H1 (cell line): ENCODE measurements at regions of chr1 and their contacts with region 1.

Region 1: GRCh38 chr1:204806943-204807687 is 63.5 kb upstream of the NFASC start:
- DNase-seq: peak; percentile 64 to 97
- H3K4me3 ChIP-seq: peak overlapping the region; percentile 19 to 85 (median 70); a peak in 7 of 8 replicates
- H3K27ac ChIP-seq: no peak overlapping the region
- H3K4me1 ChIP-seq: peaks cover 0 to 4% (median 0%) of the 10 kb centered on the region in 4 experiments; a peak in 2 of 7 replicates
- H3K27me3 ChIP-seq: no peaks in the 10 kb centered on the region
- CTCF ChIP-seq: peak; percentile 73 to 99 (median 92)
- EP300 ChIP-seq: peak in 1 of 2 experiments; percentile 49; a peak in 1 of 3 replicates
- POLR2A ChIP-seq: no peak
- RAD21 ChIP-seq: peak; percentile 84 to 88

Region 2: DNA sequence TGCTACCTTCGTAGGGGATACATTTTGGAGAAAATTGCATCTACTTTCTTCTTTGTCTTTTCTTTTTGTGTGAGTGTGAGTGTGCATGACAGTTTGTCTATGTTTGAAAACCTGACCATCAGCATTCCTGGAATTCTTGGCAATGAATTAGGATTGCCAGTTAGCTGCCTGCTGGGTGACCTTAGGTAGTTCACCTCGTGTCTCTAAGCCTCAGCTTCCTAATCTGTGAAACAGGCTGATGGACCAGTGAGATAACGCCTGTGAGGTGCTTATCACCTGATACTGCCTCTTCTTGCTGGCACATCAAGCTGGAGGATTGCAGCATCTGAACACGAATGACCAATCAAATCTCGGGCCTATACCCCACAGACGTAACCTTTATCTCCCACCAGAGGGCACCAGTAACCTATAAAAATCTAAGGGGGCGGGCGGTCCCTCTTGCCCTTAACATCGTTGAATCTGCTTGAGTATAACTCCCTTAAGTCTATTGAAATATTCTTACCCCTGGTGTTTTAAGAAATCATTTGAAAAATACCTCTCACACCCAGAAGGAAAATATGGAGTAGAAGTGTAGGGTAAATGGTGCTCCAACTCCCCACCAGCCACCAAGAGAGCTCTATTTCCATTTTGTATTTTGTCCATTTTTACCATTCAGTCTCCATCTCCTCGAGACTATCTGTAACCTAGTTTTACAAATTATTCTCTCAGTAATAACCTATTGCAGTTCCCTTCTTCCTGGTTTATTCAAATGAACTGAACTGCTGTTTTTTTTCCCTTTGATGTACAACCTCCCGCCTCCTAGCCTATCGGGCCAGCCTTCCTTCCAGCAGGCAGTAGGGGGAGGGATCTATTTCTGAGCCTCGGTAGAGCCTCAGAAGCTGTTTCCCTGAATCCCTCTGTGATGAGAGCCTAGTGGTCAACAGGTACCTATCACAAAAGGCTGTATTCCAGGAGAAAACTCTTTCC is 241.2 kb before region 1 on chr1:
- CTCF ChIA-PET with region 1: interaction called, 397 read pairs
- POLR2A ChIA-PET with region 1: interaction called, 5 read pairs
- DNase-seq: peak in 1 of 2 experiments; percentile 63
- H3K4me3 ChIP-seq: peak overlapping the region in 1 of 4 experiments; percentile 34; a peak in 2 of 8 replicates
- H3K27ac ChIP-seq: peak overlapping the region; percentile 4; the same call in 1 of the 2 replicates
- H3K4me1 ChIP-seq: peaks cover 3 to 24% (median 13%) of the 10 kb centered on the region in 4 experiments; a peak in 6 of 7 replicates
- H3K27me3 ChIP-seq: no peaks in the 10 kb centered on the region; a peak in 1 of 7 replicates
- CTCF ChIP-seq: peak; percentile 36 to 83 (median 73)
- EP300 ChIP-seq: peak in 1 of 2 experiments; percentile 85; a peak in 1 of 3 replicates
- POLR2A ChIP-seq: no peak
- RAD21 ChIP-seq: peak; percentile 84 to 89

Region 3: DNA sequence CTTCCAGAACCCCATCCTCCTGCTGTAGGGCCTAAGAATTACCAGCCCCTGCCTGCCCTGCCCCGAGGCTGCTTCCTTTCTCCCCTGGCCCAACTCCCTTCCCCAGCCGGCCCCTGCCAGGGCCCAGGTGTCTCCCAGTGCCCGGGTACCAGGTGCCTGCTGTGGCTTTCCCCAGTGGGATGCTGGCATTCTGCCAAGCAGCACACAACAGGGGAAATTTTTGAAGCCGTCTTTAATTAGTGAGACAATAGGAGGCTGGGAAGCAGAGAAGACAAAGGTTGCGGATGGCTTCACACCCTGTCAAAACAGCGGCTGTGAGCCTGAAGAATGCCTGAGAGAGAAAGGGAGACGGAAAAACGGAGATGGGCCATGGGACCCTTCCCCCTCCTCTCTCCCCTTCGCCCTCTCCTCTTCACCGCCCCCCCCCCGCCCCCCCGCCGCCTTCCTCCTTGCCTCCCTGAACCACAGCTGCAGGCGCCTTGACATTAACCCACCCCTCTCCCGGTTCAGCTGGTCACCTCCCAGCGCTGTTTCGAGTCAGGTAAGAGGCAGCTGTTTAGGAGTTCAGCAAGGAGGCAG is 155.2 kb before region 1 on chr1:
- CTCF ChIA-PET with region 1: interaction called, 23 read pairs
- POLR2A ChIA-PET with region 1: no interaction called
- DNase-seq: peak; percentile 46 to 72
- H3K4me3 ChIP-seq: peak overlapping the region in 1 of 4 experiments; percentile 31; a peak in 2 of 8 replicates
- H3K27ac ChIP-seq: no peak overlapping the region
- H3K4me1 ChIP-seq: peaks cover 12 to 27% (median 16%) of the 10 kb centered on the region in 4 experiments
- H3K27me3 ChIP-seq: peaks cover 0 to 8% (median 0%) of the 10 kb centered on the region in 4 experiments; a peak in 2 of 7 replicates
- CTCF ChIP-seq: no peak
- EP300 ChIP-seq: no peak
- POLR2A ChIP-seq: no peak
- RAD21 ChIP-seq: no peak

Region 4: GRCh38 chr1:204706838-204707509 is 100.1 kb before region 1 on chr1:
- CTCF ChIA-PET with region 1: interaction called, 19 read pairs
- POLR2A ChIA-PET with region 1: no interaction called
- DNase-seq: peak in 1 of 2 experiments; percentile 69
- H3K4me3 ChIP-seq: peak overlapping the region in 1 of 4 experiments; percentile 10; a peak in 3 of 8 replicates
- H3K27ac ChIP-seq: no peak overlapping the region
- H3K4me1 ChIP-seq: peaks cover 31 to 43% (median 32%) of the 10 kb centered on the region in 4 experiments
- H3K27me3 ChIP-seq: peaks cover 22 to 55% (median 47%) of the 10 kb centered on the region in 4 experiments
- CTCF ChIP-seq: no peak
- EP300 ChIP-seq: 0 out of 3 replicates have a peak, but pooled peaks of 1 of the 2 experiments have one; percentile 5
- POLR2A ChIP-seq: no peak
- RAD21 ChIP-seq: no peak

Region 5: GRCh38 chr1:204751894-204752687 is 55.0 kb before region 1 on chr1:
- CTCF ChIA-PET with region 1: interaction called, 22 read pairs
- POLR2A ChIA-PET with region 1: no interaction called
- DNase-seq: peak; percentile 31 to 65
- H3K4me3 ChIP-seq: no peak overlapping the region
- H3K27ac ChIP-seq: no peak overlapping the region
- H3K4me1 ChIP-seq: peaks cover 0 to 7% (median 5%) of the 10 kb centered on the region in 4 experiments; a peak in 5 of 7 replicates
- H3K27me3 ChIP-seq: no peaks in the 10 kb centered on the region
- CTCF ChIP-seq: no peak; a peak in 1 of 4 replicates
- EP300 ChIP-seq: no peak
- POLR2A ChIP-seq: no peak
- RAD21 ChIP-seq: peak in 1 of 2 experiments; percentile 26; a peak in 1 of 4 replicates

Region 6: GRCh38 chr1:204828338-204828850 is 21.3 kb after region 1 on chr1:
- CTCF ChIA-PET with region 1: interaction called, 361 read pairs
- POLR2A ChIA-PET with region 1: interaction called, 4 read pairs
- DNase-seq: peak; percentile 43 to 93
- H3K4me3 ChIP-seq: peak overlapping the region; percentile 47 to 66 (median 55)
- H3K27ac ChIP-seq: no peak overlapping the region
- H3K4me1 ChIP-seq: peaks cover 3 to 10% (median 8%) of the 10 kb centered on the region in 4 experiments; a peak in 6 of 7 replicates
- H3K27me3 ChIP-seq: peaks cover 0 to 8% (median 3%) of the 10 kb centered on the region in 4 experiments; a peak in 4 of 7 replicates
- CTCF ChIP-seq: peak in 2 of 3 experiments; percentile 19 to 35; a peak in 3 of 4 replicates
- EP300 ChIP-seq: no peak
- POLR2A ChIP-seq: no peak
- RAD21 ChIP-seq: peak in 1 of 2 experiments; percentile 32; a peak in 1 of 4 replicates

Region 7: DNA sequence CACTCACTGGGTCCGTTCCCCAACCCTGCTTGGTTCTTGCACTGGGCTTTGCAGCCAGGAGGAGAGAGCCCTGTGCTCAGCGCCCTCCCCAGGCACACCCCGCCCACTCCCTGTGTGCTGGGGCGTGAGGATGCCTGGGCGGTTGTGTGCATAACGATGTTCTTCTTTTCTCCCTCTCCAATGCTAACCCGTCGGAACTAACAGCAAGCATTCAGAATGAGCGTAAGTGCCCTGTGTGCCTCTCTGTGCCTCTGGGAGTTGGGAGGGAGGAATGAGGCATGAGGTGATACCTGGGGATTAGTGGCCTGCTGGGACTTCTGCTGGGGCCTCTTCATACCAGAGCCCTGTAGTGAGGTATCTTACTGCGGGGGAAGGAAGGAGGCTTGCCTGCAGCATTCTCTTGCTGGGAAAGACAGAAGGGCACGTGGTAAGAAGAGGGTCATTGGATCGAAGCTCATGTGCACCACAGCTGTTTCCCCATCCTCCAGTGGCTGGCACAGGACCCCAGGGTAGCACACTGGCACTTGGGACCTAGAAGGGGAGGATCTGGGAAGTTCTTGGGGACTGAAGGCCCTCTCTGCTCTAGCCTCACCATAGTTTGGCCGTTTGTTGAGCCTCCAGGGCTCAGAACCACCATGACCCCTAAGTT is 143.4 kb after region 1 on chr1:
- CTCF ChIA-PET with region 1: interaction called, 122 read pairs
- POLR2A ChIA-PET with region 1: no interaction called
- DNase-seq: no peak
- H3K4me3 ChIP-seq: no peak overlapping the region
- H3K27ac ChIP-seq: no peak overlapping the region
- H3K4me1 ChIP-seq: peaks cover 0 to 7% (median 4%) of the 10 kb centered on the region in 4 experiments; a peak in 5 of 7 replicates
- H3K27me3 ChIP-seq: no peaks in the 10 kb centered on the region
- CTCF ChIP-seq: no peak
- EP300 ChIP-seq: no peak
- POLR2A ChIP-seq: no peak
- RAD21 ChIP-seq: no peak

Region 8: GRCh38 chr1:205108464-205108863 is 301.3 kb after region 1 on chr1:
- CTCF ChIA-PET with region 1: no interaction called
- POLR2A ChIA-PET with region 1: no interaction called
- DNase-seq: no peak
- H3K4me3 ChIP-seq: no peak overlapping the region
- H3K27ac ChIP-seq: no peak overlapping the region
- H3K4me1 ChIP-seq: no peaks in the 10 kb centered on the region; a peak in 1 of 7 replicates
- H3K27me3 ChIP-seq: no peaks in the 10 kb centered on the region
- CTCF ChIP-seq: no peak
- EP300 ChIP-seq: no peak
- POLR2A ChIP-seq: no peak
- RAD21 ChIP-seq: no peak